ENCODE measurements at regions of chr6 and their contacts with region 1.

Region 1: GRCh38 chr6:118679327-118679901 is 28.0 kb upstream of the CEP85L start:
- DNase-seq: no peak
- H3K4me3 ChIP-seq: no peak overlapping the region
- H3K4me3 Mint-ChIP-seq: peak overlapping the region in 4 of 8 donors; percentile 8 to 59 (median 48)
- H3K27ac ChIP-seq: no peak overlapping the region
- H3K27ac Mint-ChIP-seq: peak overlapping the region in 4 of 7 donors; percentile 16 to 54 (median 32)
- H3K4me1 ChIP-seq: peaks cover 50% of the 10 kb centered on the region
- H3K4me1 Mint-ChIP-seq: peaks cover 54 to 72% (median 66%) of the 10 kb centered on the region in 4 donors
- H3K27me3 ChIP-seq: no peaks in the 10 kb centered on the region
- H3K27me3 Mint-ChIP-seq: no peaks in the 10 kb centered on the region

Region 2: DNA sequence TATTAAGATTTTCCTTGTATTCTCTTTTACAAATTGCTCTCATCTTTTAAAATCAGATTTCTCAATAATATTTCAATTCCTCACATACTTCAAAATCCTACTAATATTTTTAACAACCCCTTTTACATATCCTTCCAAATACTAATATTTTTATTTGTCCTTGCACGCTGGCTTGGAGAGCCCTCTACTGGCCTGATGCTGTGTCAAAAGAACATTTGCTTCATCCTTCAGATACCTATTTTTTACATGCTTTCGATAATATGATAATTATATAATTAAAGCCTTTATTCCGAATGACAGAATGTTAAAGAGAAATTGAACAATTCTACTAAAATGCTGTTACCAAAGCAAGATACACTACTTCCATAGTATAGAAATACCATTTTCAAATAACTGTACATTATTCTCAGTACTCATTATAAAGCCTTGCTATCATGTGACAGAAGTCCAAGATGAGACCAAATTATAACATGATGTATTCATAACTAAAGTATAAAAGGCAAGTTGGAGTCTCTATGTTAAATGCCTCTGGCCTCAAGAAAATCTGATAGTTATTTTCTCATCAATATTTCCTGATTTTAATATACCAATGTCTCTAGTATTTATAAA is 170.3 kb before region 1 on chr6:
- CTCF ChIA-PET with region 1: no interaction called
- POLR2A ChIA-PET with region 1: no interaction called
- intact Hi-C with region 1: no loop called
- DNase-seq: no peak
- H3K4me3 ChIP-seq: no peak overlapping the region
- H3K4me3 Mint-ChIP-seq: no peak overlapping the region
- H3K27ac ChIP-seq: no peak overlapping the region
- H3K27ac Mint-ChIP-seq: peak overlapping the region in 1 of 7 donors; percentile 44
- H3K4me1 ChIP-seq: no peaks in the 10 kb centered on the region
- H3K4me1 Mint-ChIP-seq: peaks cover 27 to 33% (median 28%) of the 10 kb centered on the region in 4 donors
- H3K27me3 ChIP-seq: no peaks in the 10 kb centered on the region
- H3K27me3 Mint-ChIP-seq: no peaks in the 10 kb centered on the region

Region 3: GRCh38 chr6:118660218-118660569 is 19.2 kb before region 1 on chr6:
- CTCF ChIA-PET with region 1: no interaction called
- POLR2A ChIA-PET with region 1: no interaction called
- intact Hi-C with region 1: loop called (anchors 2 kb)
- DNase-seq: peak; percentile 67 to 82 (median 69)
- H3K4me3 ChIP-seq: no peak overlapping the region
- H3K4me3 Mint-ChIP-seq: peak overlapping the region in 6 of 8 donors; percentile 46 to 76 (median 55)
- H3K27ac ChIP-seq: no peak overlapping the region
- H3K27ac Mint-ChIP-seq: peak overlapping the region; percentile 68 to 89 (median 84)
- H3K4me1 ChIP-seq: peaks cover 59% of the 10 kb centered on the region
- H3K4me1 Mint-ChIP-seq: peaks cover 49 to 71% (median 59%) of the 10 kb centered on the region in 4 donors
- H3K27me3 ChIP-seq: no peaks in the 10 kb centered on the region
- H3K27me3 Mint-ChIP-seq: no peaks in the 10 kb centered on the region

Measured in CD4-positive, alpha-beta memory T cell (primary cell).